Naive thymus-derived CD4-positive, alpha-beta T cell (primary cell): ENCODE measurements at regions of chr2 and their contacts with region 1.

Region 1: GRCh38 chr2:10448208-10448645 is at the start of gene ODC1:
- DNase-seq: peak; percentile 96 to 99 (median 97)
- ATAC-seq: peak; percentile 92
- H3K4me3 ChIP-seq: peak within 1 kb of the TSS; percentile 91
- H3K4me3 Mint-ChIP-seq: peak within 1 kb of the TSS; percentile 81 to 95 (median 86)
- H3K27ac ChIP-seq: peak within 1 kb of the TSS; percentile 88
- H3K27ac Mint-ChIP-seq: peak within 1 kb of the TSS; percentile 76 to 94 (median 89)
- H3K4me1 ChIP-seq: peaks cover 12 to 26% of the 10 kb centered on the region in 2 donors
- H3K4me1 Mint-ChIP-seq: peaks cover 7 to 47% (median 24%) of the 10 kb centered on the region in 7 donors
- H3K27me3 ChIP-seq: no peaks in the 10 kb centered on the region
- H3K27me3 Mint-ChIP-seq: no peaks in the 10 kb centered on the region
- total RNA-seq, gene ODC1: 32.7 to 88.2 (median 52.4) TPM

Region 2: DNA sequence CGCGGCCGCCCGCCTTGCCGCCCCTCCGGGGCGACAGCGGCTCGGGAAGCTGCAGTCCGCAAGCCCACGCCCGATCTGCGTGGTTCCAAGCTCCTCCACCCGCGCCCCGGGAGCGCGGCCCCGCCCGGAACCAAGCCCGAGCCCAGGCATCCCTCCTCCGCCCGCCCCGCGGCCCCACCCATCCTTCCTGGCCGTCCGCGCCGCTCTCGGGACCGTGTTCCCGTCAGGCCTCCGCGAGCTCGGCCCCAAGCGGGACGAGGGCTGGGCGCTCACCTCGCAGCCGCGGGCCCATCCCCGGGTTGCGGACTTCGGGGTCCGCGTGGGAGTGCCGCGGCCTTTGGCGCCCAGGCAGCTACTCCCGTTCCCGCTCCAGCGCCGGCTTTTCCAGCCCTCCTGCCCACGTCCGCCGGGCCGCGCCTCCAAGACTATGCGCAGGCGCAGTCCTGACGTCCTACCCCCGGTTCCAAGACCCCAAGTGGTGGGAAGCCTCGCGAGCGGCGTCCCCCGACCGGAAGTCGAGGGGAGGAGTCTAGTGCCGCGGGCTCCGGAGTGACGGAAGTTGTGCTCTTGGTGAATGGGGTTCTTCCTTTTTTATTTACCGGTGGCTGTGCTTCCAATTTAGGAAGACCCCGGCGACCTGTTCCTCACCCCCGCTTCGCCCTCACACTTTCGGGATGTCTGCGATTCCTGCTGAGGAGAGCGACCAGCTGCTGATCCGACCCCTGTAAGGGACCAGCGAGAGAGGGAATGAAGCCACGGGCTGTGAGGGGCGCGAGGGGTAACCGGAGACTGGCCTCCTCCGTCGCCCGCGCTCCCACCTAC is 1024.9 kb before region 1 on chr2 and contains the starts of genes CPSF3 and ITGB1BP1:
- CTCF ChIA-PET with region 1: no interaction called
- POLR2A ChIA-PET with region 1: no interaction called
- intact Hi-C with region 1: loop called in 1 of 2 experiments (anchors 10 kb)
- DNase-seq: peak; percentile 88 to 98 (median 94)
- ATAC-seq: peak; percentile 92
- H3K4me3 ChIP-seq: peak within 1 kb of the TSS; percentile 90
- H3K4me3 Mint-ChIP-seq: peak within 1 kb of the TSS in 5 of 10 donors; percentile 87 to 95 (median 92)
- H3K27ac ChIP-seq: peak within 1 kb of the TSS; percentile 84
- H3K27ac Mint-ChIP-seq: peak within 1 kb of the TSS in 8 of 9 donors; percentile 82 to 97 (median 92)
- H3K4me1 ChIP-seq: peaks cover 22 to 24% of the 10 kb centered on the region in 2 donors
- H3K4me1 Mint-ChIP-seq: peaks cover 20 to 41% (median 28%) of the 10 kb centered on the region in 7 donors
- H3K27me3 ChIP-seq: no peaks in the 10 kb centered on the region
- H3K27me3 Mint-ChIP-seq: no peaks in the 10 kb centered on the region
- total RNA-seq, gene CPSF3: 18.0 to 47.8 (median 21.7) TPM
- total RNA-seq, gene ITGB1BP1: 45.1 to 107 (median 54.3) TPM

Region 3: DNA sequence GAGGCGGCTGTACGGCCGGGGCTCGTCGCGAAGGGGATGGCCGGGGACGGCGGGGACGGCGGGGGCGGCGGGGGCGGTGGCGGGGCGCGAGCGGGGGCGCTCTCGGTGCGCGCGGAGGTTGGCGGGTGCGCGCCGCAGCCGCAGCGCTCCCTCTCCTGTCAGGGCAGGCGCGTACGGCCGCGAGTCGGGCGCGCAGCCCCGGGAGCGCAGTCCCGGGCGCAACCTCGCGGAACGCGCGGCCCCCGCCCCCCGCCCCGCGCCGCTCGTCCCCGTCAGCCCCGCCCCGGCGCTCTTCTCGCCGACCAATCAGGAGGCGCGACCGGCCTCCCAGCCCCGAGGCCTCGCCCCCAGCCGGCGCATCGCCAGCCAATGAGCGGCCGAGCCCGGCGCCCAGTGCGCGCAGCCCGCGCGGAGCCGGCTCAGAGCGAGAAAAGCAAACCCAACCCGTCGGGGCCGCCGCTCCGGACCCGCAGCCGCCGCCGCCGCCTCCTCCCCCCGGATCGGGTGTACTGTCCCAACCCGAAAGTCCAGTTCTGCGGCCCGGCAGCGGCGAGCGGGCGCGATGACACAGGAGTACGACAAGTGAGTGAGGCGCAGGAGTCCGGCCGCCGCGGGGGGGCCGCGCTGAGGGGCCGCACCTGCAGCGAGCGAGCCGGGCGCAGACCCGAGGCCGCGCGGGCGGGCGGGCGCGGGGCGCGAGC is 496.8 kb before region 1 on chr2 and contains the start of gene GRHL1:
- CTCF ChIA-PET with region 1: no interaction called
- POLR2A ChIA-PET with region 1: no interaction called
- intact Hi-C with region 1: loop called (anchors 5 kb)
- DNase-seq: peak; percentile 82 to 95 (median 90)
- ATAC-seq: peak; percentile 97
- H3K4me3 ChIP-seq: peak within 1 kb of the TSS; percentile 57
- H3K4me3 Mint-ChIP-seq: peak within 1 kb of the TSS; percentile 70 to 90 (median 86)
- H3K27ac ChIP-seq: peak within 1 kb of the TSS; percentile 63
- H3K27ac Mint-ChIP-seq: peak within 1 kb of the TSS in 7 of 9 donors; percentile 15 to 77 (median 56)
- H3K4me1 ChIP-seq: no peaks in the 10 kb centered on the region
- H3K4me1 Mint-ChIP-seq: peaks cover 0 to 13% (median 8%) of the 10 kb centered on the region in 7 donors
- H3K27me3 ChIP-seq: no peaks in the 10 kb centered on the region
- H3K27me3 Mint-ChIP-seq: peaks cover 19 to 77% (median 39%) of the 10 kb centered on the region in 5 donors
- total RNA-seq, gene GRHL1: 0.19 to 1.3 (median 0.56) TPM

Region 4: DNA sequence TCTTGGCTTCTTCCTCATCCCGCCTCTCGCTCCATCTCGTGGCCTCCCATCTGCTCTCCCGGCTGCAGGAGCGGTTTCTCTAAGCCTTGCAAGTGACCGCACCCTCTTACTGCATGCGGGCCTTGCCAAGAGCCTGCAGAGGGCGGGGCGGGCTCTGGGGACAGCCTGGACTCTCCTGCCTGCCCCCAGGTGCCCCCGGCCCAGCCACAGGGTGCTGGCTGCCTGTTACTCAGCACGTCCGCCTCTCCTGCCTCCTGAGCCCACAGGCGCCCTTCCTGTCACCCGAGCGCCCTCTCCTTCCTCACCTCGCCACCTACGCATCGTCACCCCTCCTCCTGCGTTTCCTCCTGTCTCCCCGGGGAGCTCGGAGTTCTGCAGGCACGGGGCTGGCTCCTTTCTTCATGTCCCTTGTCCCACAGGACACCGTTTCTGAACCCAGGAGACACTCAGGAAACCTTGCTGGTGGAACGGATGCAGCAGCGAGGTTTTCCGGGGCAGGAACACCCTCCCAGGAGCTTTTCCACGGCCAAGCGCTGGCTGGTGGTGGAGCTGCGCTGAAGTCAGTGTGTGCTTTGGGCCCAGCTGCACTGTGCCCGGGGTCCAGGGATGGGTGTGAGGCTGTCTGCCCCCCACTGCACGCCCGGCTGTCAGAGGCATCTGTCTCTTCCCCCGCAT is 117.1 kb before region 1 on chr2:
- CTCF ChIA-PET with region 1: interaction called, 3 read pairs
- POLR2A ChIA-PET with region 1: interaction called, 5 read pairs
- intact Hi-C with region 1: loop called in 1 of 2 experiments (anchors 1 kb)
- DNase-seq: peak; percentile 41 to 79 (median 70)
- ATAC-seq: peak; percentile 58
- H3K4me3 ChIP-seq: peak overlapping the region; percentile 80
- H3K4me3 Mint-ChIP-seq: peak overlapping the region; percentile 85 to 97 (median 94)
- H3K27ac ChIP-seq: peak overlapping the region; percentile 82
- H3K27ac Mint-ChIP-seq: peak overlapping the region; percentile 92 to 99 (median 98)
- H3K4me1 ChIP-seq: peaks cover 32 to 65% of the 10 kb centered on the region in 2 donors
- H3K4me1 Mint-ChIP-seq: peaks cover 58 to 96% (median 93%) of the 10 kb centered on the region in 7 donors
- H3K27me3 ChIP-seq: no peaks in the 10 kb centered on the region
- H3K27me3 Mint-ChIP-seq: no peaks in the 10 kb centered on the region

Region 5: DNA sequence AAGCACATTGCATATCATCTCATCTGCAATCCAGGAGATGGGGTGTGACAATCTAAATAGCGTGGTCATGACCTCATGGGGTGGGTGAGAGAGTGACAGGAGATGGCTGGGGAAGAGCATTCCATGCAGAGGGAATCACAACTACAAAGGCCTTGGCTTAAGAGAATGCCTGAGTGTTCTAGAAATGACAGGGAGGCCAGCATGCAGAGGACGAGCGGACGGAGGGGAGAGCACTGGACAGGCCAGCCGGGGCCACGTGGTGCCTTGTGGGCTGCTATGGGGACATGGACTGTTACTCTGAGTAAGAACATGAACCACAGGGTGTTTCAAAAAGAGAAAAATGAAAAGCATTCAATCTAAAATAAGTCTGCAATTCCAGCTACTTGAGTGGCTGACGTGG is 117.8 kb after region 1 on chr2:
- CTCF ChIA-PET with region 1: no interaction called
- POLR2A ChIA-PET with region 1: no interaction called
- intact Hi-C with region 1: loop called in 1 of 2 experiments (anchors 10 kb)
- DNase-seq: no peak
- ATAC-seq: no peak
- H3K4me3 ChIP-seq: no peak overlapping the region
- H3K4me3 Mint-ChIP-seq: no peak overlapping the region
- H3K27ac ChIP-seq: no peak overlapping the region
- H3K27ac Mint-ChIP-seq: no peak overlapping the region
- H3K4me1 ChIP-seq: no peaks in the 10 kb centered on the region
- H3K4me1 Mint-ChIP-seq: peaks cover 0 to 9% (median 0%) of the 10 kb centered on the region in 7 donors
- H3K27me3 ChIP-seq: no peaks in the 10 kb centered on the region
- H3K27me3 Mint-ChIP-seq: no peaks in the 10 kb centered on the region

Region 6: DNA sequence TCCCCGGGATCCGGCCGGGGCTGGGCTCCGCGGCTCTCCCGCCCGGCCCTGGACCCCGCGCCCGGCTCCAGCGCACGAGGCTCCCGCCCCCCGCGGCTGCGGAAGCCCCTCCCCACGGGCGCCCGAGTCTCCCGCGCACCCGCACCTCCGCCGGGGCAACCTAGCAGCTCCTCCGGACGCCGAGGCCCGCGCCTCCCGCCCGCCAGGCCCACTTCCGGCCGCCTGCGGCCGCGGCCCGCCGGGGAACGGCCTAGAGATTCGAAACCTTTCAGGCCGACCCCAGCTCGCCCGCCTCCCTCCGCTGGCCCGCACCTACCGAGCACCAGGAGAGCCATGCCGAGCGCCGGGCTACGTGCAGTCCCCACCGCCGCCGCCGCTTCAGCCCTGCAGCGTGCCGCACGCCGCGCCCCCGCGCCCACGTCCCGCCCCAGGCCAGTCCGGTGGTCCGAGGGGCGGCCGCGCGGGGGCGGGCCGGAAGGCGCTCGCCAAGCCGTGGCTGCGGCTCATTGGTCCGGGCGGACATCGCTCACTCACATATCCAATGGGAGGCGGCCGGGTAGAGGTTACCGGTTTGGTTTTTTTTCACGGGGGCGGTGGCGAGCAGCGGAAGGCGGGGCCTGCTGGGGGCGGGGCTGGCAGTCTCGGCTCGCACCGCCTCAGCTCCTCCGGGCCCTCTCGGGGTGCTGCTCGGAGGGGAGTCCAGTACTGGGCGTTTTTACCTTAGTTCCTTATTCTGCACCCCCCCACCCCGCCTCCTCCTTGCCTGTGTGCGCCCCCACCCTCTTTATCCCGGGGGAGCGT is 364.3 kb after region 1 on chr2 and contains the start of gene PDIA6:
- CTCF ChIA-PET with region 1: no interaction called
- POLR2A ChIA-PET with region 1: interaction called, 3 read pairs
- intact Hi-C with region 1: loop called in 1 of 2 experiments (anchors 2 kb)
- DNase-seq: peak; percentile 87 to 96 (median 90)
- ATAC-seq: peak; percentile 95
- H3K4me3 ChIP-seq: peak within 1 kb of the TSS; percentile 73
- H3K4me3 Mint-ChIP-seq: peak within 1 kb of the TSS; percentile 87 to 95 (median 91)
- H3K27ac ChIP-seq: peak within 1 kb of the TSS; percentile 86
- H3K27ac Mint-ChIP-seq: peak within 1 kb of the TSS; percentile 77 to 96 (median 84)
- H3K4me1 ChIP-seq: peaks cover 14 to 15% of the 10 kb centered on the region in 2 donors
- H3K4me1 Mint-ChIP-seq: peaks cover 28 to 44% (median 39%) of the 10 kb centered on the region in 7 donors
- H3K27me3 ChIP-seq: no peaks in the 10 kb centered on the region
- H3K27me3 Mint-ChIP-seq: peaks cover 0 to 15% (median 0%) of the 10 kb centered on the region in 5 donors
- total RNA-seq, gene PDIA6: 24.3 to 173 (median 46.8) TPM